B cell (primary cell): ENCODE measurements at regions of chr17 and their contacts with region 1.

Region 1: DNA sequence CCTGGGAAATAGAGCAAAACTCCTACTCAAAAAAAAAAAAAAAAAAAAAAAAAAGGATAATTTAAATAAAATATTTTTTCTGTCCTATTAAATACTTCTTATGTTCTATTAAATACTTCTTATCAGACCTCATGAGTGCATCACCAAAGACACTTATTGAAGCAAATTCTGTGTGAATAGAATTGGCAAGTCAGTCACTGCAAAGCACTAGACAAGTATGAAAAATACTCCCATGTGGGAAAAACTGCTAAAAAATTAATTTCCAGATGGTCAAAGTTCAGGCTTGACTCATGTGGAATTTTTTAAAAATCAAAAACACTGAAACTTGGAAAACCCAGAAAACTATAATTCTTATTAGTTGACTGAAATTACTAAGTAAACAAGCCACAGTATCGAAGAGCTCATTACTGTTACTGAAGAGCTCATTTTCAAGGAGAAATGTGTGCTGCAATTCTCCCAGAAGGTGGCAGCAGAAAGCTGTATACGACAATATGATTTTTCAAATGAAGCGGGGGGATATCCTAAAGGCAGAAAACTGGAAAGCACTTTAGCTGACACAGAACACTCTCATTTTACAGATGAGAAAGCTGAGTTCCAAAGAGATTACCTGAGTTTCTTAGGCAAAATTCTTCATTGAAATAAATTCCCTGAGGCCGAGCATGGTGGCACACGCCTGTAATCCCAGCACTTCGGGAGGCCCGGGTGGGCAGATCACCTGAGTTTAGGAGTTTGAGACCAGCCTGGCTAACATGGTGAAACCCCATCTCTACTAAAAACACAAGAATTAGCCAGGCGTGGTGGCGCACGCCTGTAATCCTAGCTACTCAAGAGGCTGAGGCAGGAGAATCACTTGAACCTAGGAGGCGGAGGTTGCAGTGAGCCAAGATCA is 15.9 kb upstream of the FBXO47 start:
- DNase-seq: peak; percentile 76
- ATAC-seq: peak; percentile 24
- H3K4me3 ChIP-seq: no peak overlapping the region
- H3K4me3 Mint-ChIP-seq: no peak overlapping the region
- H3K27ac ChIP-seq: no peak overlapping the region
- H3K27ac Mint-ChIP-seq: no peak overlapping the region
- H3K4me1 ChIP-seq: no peaks in the 10 kb centered on the region
- H3K4me1 Mint-ChIP-seq: peaks cover 2% of the 10 kb centered on the region
- H3K27me3 ChIP-seq: peaks cover 0 to 3% (median 0%) of the 10 kb centered on the region in 4 experiments
- H3K27me3 Mint-ChIP-seq: peaks cover 16% of the 10 kb centered on the region
- CTCF ChIP-seq: peak; percentile 82

Region 2: GRCh38 chr17:38967290-38967738 is 15.8 kb before region 1 on chr17 and contains the start of gene FBXO47:
- CTCF ChIA-PET with region 1: interaction called, 22 read pairs
- POLR2A ChIA-PET with region 1: no interaction called
- intact Hi-C with region 1: no loop called
- DNase-seq: peak; percentile 88
- ATAC-seq: peak; percentile 97
- H3K4me3 ChIP-seq: peak within 1 kb of the TSS in 4 of 5 experiments; percentile 30 to 50 (median 38)
- H3K4me3 Mint-ChIP-seq: peak within 1 kb of the TSS; percentile 82
- H3K27ac ChIP-seq: peak within 1 kb of the TSS in 1 of 2 donors; percentile 62
- H3K27ac Mint-ChIP-seq: peak within 1 kb of the TSS; percentile 88
- H3K4me1 ChIP-seq: peaks cover 0 to 13% of the 10 kb centered on the region in 2 donors
- H3K4me1 Mint-ChIP-seq: peaks cover 7% of the 10 kb centered on the region
- H3K27me3 ChIP-seq: no peaks in the 10 kb centered on the region
- H3K27me3 Mint-ChIP-seq: peaks cover 2% of the 10 kb centered on the region
- CTCF ChIP-seq: no peak
- total RNA-seq, gene FBXO47: not detected in 2 replicates

Region 3: GRCh38 chr17:39164675-39165143 is 181.6 kb after region 1 on chr17:
- CTCF ChIA-PET with region 1: interaction called, 77 read pairs
- POLR2A ChIA-PET with region 1: no interaction called
- intact Hi-C with region 1: no loop called
- DNase-seq: peak; percentile 86
- ATAC-seq: peak; percentile 89
- H3K4me3 ChIP-seq: peak overlapping the region; percentile 36 to 74 (median 69)
- H3K4me3 Mint-ChIP-seq: peak overlapping the region; percentile 90
- H3K27ac ChIP-seq: no peak overlapping the region
- H3K27ac Mint-ChIP-seq: peak overlapping the region; percentile 29
- H3K4me1 ChIP-seq: peaks cover 27 to 29% of the 10 kb centered on the region in 2 donors
- H3K4me1 Mint-ChIP-seq: peaks cover 28% of the 10 kb centered on the region
- H3K27me3 ChIP-seq: peaks cover 0 to 38% (median 10%) of the 10 kb centered on the region in 4 experiments
- H3K27me3 Mint-ChIP-seq: peaks cover 14% of the 10 kb centered on the region
- CTCF ChIP-seq: peak; percentile 85

Region 4: DNA sequence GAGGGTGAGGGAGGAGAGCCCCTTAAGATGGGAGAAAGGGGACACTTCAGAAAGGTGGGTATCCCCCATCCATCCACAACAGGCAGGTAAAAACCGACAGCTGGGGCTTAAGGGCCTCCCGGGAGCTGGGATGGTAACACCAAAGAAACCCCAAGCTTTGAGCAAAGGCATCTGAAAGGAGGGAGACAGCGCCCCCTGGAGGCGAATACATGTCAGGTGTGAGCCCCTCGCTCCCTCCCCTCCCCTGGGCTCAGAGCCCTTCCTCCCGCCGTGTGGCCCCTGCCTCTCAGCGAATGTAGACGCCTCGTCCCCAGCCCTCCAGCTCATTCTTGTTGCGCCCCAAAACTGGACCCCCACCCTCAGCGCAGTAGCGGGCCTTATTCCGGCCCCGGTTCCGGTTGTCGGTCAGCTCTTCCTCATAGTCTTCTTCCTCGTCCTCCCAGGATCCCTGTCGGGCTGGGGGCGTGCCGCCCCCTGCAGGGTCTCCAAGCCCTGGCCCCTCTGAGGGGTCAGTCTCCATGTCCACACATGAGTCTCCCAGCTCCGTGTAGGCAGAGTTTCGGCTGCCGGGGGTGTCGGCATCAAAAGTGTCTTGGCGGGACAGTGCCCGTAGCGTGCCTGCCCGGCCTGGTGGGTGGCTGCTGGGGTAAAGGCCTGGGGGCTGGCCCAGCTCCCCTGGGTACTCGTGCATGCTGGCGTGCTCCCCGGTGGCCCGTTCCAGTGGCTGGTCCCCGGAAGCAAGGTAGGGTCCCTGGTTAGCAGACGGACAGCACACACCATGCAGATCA is 192.0 kb after region 1 on chr17:
- CTCF ChIA-PET with region 1: interaction called, 97 read pairs
- POLR2A ChIA-PET with region 1: no interaction called
- intact Hi-C with region 1: loop called (anchors 1 kb)
- DNase-seq: peak; percentile 83
- ATAC-seq: peak; percentile 76
- H3K4me3 ChIP-seq: peak overlapping the region in 2 of 5 experiments; percentile 9 to 35
- H3K4me3 Mint-ChIP-seq: peak overlapping the region; percentile 53
- H3K27ac ChIP-seq: no peak overlapping the region
- H3K27ac Mint-ChIP-seq: no peak overlapping the region
- H3K4me1 ChIP-seq: peaks cover 0 to 7% of the 10 kb centered on the region in 2 donors
- H3K4me1 Mint-ChIP-seq: peaks cover 5% of the 10 kb centered on the region
- H3K27me3 ChIP-seq: peaks cover 0 to 30% (median 10%) of the 10 kb centered on the region in 4 experiments
- H3K27me3 Mint-ChIP-seq: peaks cover 23% of the 10 kb centered on the region
- CTCF ChIP-seq: peak; percentile 82

Region 5: GRCh38 chr17:39199820-39200069 is 216.6 kb after region 1 on chr17:
- CTCF ChIA-PET with region 1: interaction called, 10 read pairs
- POLR2A ChIA-PET with region 1: no interaction called
- intact Hi-C with region 1: no loop called
- DNase-seq: no peak
- ATAC-seq: peak; percentile 62
- H3K4me3 ChIP-seq: peak overlapping the region; percentile 78 to 100 (median 95)
- H3K4me3 Mint-ChIP-seq: peak overlapping the region; percentile 89
- H3K27ac ChIP-seq: peak overlapping the region; percentile 89 to 99
- H3K27ac Mint-ChIP-seq: peak overlapping the region; percentile 100
- H3K4me1 ChIP-seq: peaks cover 37 to 61% of the 10 kb centered on the region in 2 donors
- H3K4me1 Mint-ChIP-seq: peaks cover 57% of the 10 kb centered on the region
- H3K27me3 ChIP-seq: no peaks in the 10 kb centered on the region
- H3K27me3 Mint-ChIP-seq: no peaks in the 10 kb centered on the region
- CTCF ChIP-seq: no peak

Region 6: DNA sequence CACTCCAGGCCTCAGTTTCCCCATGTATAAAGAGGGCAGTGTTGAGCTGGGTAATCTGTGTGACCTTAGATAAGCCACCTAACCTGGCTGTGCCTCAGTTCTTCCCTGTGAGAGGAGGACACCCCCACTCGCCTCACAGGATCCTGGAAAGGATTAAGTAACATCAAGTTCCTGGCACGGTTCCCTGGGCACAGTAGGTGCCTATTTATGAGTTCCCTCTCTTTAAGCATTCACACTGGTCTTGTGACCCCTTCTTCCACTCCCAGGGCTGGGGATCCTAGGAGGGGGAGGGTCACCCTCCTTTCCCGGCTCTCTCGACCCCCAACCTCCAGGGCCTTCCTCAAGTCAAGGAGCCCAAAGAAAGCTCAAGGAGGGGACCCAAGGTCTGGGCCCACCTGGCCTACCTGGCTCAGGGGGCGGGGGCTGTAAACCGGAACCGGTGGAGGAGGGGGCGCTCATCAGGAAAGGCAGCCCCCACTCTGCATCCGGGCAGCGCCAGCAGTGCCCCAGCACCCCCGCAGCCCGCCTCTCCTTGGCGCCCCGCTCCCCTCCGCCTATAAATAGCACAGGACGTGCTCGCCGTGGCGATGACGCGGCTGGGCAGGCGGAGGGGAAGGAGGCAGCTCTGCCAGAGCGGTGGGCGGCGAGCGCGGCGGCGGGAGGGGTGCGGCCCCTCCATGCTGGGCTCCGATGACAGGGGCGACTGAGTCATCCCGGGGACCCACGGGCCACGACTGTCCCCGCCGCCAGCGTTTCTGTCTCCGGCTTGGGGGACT is 226.4 kb after region 1 on chr17:
- CTCF ChIA-PET with region 1: interaction called, 10 read pairs
- POLR2A ChIA-PET with region 1: no interaction called
- intact Hi-C with region 1: no loop called
- DNase-seq: peak; percentile 65
- ATAC-seq: peak; percentile 40
- H3K4me3 ChIP-seq: peak overlapping the region in 4 of 5 experiments; percentile 35 to 52 (median 48)
- H3K4me3 Mint-ChIP-seq: peak overlapping the region; percentile 77
- H3K27ac ChIP-seq: no peak overlapping the region
- H3K27ac Mint-ChIP-seq: peak overlapping the region; percentile 68
- H3K4me1 ChIP-seq: peaks cover 32 to 39% of the 10 kb centered on the region in 2 donors
- H3K4me1 Mint-ChIP-seq: peaks cover 33% of the 10 kb centered on the region
- H3K27me3 ChIP-seq: peaks cover 0 to 12% (median 3%) of the 10 kb centered on the region in 4 experiments
- H3K27me3 Mint-ChIP-seq: no peaks in the 10 kb centered on the region
- CTCF ChIP-seq: no peak

Region 7: GRCh38 chr17:39235555-39236449 is 252.7 kb after region 1 on chr17:
- CTCF ChIA-PET with region 1: interaction called, 138 read pairs
- POLR2A ChIA-PET with region 1: no interaction called
- intact Hi-C with region 1: loop called (anchors 1 kb)
- DNase-seq: peak; percentile 63
- ATAC-seq: peak; percentile 22
- H3K4me3 ChIP-seq: no peak overlapping the region
- H3K4me3 Mint-ChIP-seq: no peak overlapping the region
- H3K27ac ChIP-seq: no peak overlapping the region
- H3K27ac Mint-ChIP-seq: peak overlapping the region; percentile 56
- H3K4me1 ChIP-seq: peaks cover 25 to 35% of the 10 kb centered on the region in 2 donors
- H3K4me1 Mint-ChIP-seq: peaks cover 31% of the 10 kb centered on the region
- H3K27me3 ChIP-seq: peaks cover 0 to 17% (median 16%) of the 10 kb centered on the region in 4 experiments
- H3K27me3 Mint-ChIP-seq: peaks cover 22% of the 10 kb centered on the region
- CTCF ChIP-seq: peak; percentile 57